CD4-positive, alpha-beta T cell (primary cell): ENCODE measurements at regions of chr13 and their contacts with region 1.

Region 1: GRCh38 chr13:45340926-45341750 is at the start of gene TPT1:
- DNase-seq: peak; percentile 99 to 100 (median 100)
- ATAC-seq: peak; percentile 84
- H3K4me3 ChIP-seq: peak within 1 kb of the TSS; percentile 98
- H3K4me3 Mint-ChIP-seq: peak within 1 kb of the TSS; percentile 99
- H3K27ac ChIP-seq: peak within 1 kb of the TSS; percentile 98 to 100
- H3K27ac Mint-ChIP-seq: peak within 1 kb of the TSS; percentile 84
- H3K4me1 ChIP-seq: peaks cover 40% of the 10 kb centered on the region
- H3K4me1 Mint-ChIP-seq: peaks cover 66% of the 10 kb centered on the region
- H3K27me3 ChIP-seq: no peaks in the 10 kb centered on the region
- H3K27me3 Mint-ChIP-seq: no peaks in the 10 kb centered on the region
- CTCF ChIP-seq: no peak
- total RNA-seq, gene TPT1: 8,742 to 8,834 TPM

Region 2: GRCh38 chr13:43397111-43397510 is 1944.0 kb before region 1 on chr13:
- CTCF ChIA-PET with region 1: no interaction called
- POLR2A ChIA-PET with region 1: no interaction called
- intact Hi-C with region 1: no loop called
- DNase-seq: no peak
- ATAC-seq: no peak
- H3K4me3 ChIP-seq: no peak overlapping the region
- H3K4me3 Mint-ChIP-seq: no peak overlapping the region
- H3K27ac ChIP-seq: no peak overlapping the region
- H3K27ac Mint-ChIP-seq: no peak overlapping the region
- H3K4me1 ChIP-seq: no peaks in the 10 kb centered on the region
- H3K4me1 Mint-ChIP-seq: no peaks in the 10 kb centered on the region
- H3K27me3 ChIP-seq: peaks cover 0 to 7% of the 10 kb centered on the region in 2 experiments
- H3K27me3 Mint-ChIP-seq: peaks cover 18% of the 10 kb centered on the region
- CTCF ChIP-seq: no peak

Region 3: DNA sequence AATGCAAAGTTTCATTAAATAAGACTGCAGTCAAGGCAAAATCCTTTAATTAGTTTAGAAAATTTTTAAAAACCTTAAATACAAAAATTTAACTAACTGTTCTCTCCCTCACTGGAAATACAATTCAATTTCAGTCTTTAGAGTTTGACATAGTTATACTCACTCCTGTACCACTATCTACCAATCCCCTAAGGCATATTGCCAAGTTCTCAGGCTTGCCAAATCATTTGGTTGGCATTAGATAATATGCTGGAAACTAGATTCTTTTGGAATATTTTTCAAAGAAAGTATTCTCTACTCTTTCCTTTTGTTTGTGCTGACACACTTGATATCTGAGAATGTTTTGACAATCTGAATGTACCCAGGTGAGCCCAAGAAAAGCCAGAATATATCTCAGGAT is 842.2 kb before region 1 on chr13:
- CTCF ChIA-PET with region 1: no interaction called
- POLR2A ChIA-PET with region 1: no interaction called
- intact Hi-C with region 1: no loop called
- DNase-seq: no peak
- ATAC-seq: no peak
- H3K4me3 ChIP-seq: no peak overlapping the region
- H3K4me3 Mint-ChIP-seq: no peak overlapping the region
- H3K27ac ChIP-seq: no peak overlapping the region
- H3K27ac Mint-ChIP-seq: no peak overlapping the region
- H3K4me1 ChIP-seq: no peaks in the 10 kb centered on the region
- H3K4me1 Mint-ChIP-seq: no peaks in the 10 kb centered on the region
- H3K27me3 ChIP-seq: no peaks in the 10 kb centered on the region
- H3K27me3 Mint-ChIP-seq: no peaks in the 10 kb centered on the region
- CTCF ChIP-seq: no peak

Region 4: DNA sequence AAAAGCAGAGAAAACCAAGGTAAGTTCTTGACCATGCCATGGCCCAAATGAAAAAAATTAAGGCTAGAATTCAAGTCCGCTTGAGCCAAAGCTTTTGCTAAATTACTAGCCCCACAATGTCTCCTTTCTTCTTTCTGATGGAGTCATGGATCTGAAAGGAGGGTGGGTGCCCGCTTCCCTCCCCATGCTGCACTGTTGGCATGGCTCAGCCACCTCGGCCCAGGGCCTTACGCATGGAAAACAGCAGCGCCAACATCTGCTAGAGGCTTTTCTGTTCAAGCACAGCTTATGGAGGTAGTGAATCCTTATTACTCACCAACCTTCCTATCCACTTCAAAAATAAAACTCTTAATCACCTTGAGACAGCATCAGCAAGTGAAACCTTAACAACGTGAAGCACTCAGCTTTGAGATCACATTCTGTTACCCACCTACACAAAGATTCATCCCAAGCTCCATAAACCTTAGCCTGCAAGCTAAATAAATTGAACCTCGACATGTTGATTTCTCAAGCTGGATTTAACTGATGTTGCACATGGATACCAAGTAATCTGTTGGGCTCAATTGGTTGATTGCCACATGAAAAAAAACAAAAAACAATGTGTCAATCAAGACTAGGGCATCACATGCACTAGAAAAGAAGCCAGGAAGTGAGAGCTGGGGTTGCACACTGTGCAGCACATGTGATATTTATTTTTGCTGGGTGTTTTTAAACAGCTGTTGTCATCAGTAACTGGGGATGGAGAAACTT is 43.5 kb before region 1 on chr13:
- CTCF ChIA-PET with region 1: no interaction called
- POLR2A ChIA-PET with region 1: interaction called, 10 read pairs
- intact Hi-C with region 1: no loop called
- DNase-seq: peak in 4 of 14 experiments; percentile 8 to 54 (median 48)
- ATAC-seq: peak; percentile 86
- H3K4me3 ChIP-seq: no peak overlapping the region
- H3K4me3 Mint-ChIP-seq: peak overlapping the region; percentile 23
- H3K27ac ChIP-seq: peak overlapping the region; percentile 44 to 53
- H3K27ac Mint-ChIP-seq: peak overlapping the region; percentile 76
- H3K4me1 ChIP-seq: peaks cover 33% of the 10 kb centered on the region
- H3K4me1 Mint-ChIP-seq: peaks cover 44% of the 10 kb centered on the region
- H3K27me3 ChIP-seq: no peaks in the 10 kb centered on the region
- H3K27me3 Mint-ChIP-seq: peaks cover 2% of the 10 kb centered on the region
- CTCF ChIP-seq: no peak

Region 5: DNA sequence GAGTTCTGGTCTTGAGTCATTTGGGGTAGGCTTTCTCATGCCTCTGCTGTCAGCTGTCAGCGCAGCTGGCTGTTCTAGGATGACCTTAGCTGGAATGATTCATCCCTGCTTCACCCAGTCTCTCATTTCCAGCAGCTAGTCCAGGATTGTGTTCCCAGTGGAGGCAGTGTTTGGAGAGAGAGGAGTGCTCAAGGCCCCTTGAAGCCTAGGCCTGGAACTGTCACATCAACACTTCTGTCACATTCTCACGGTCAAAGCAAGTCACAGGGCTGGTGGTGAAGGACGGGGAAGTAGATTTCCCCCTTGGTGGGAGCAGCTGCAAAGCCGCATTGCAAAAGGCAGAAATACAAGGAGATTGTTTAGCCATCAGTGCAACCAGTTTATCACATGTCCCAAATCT is 15.3 kb before region 1 on chr13:
- CTCF ChIA-PET with region 1: interaction called, 3 read pairs
- POLR2A ChIA-PET with region 1: interaction called, 15 read pairs
- intact Hi-C with region 1: no loop called
- DNase-seq: peak in 1 of 14 experiments; percentile 42
- ATAC-seq: no peak
- H3K4me3 ChIP-seq: no peak overlapping the region
- H3K4me3 Mint-ChIP-seq: no peak overlapping the region
- H3K27ac ChIP-seq: no peak overlapping the region
- H3K27ac Mint-ChIP-seq: no peak overlapping the region
- H3K4me1 ChIP-seq: peaks cover 37% of the 10 kb centered on the region
- H3K4me1 Mint-ChIP-seq: peaks cover 48% of the 10 kb centered on the region
- H3K27me3 ChIP-seq: no peaks in the 10 kb centered on the region
- H3K27me3 Mint-ChIP-seq: no peaks in the 10 kb centered on the region
- CTCF ChIP-seq: no peak

Region 6: GRCh38 chr13:45393941-45394570 is 52.9 kb after region 1 on chr13:
- CTCF ChIA-PET with region 1: interaction called, 16 read pairs
- POLR2A ChIA-PET with region 1: interaction called, 15 read pairs
- intact Hi-C with region 1: loop called in 1 of 2 experiments (anchors 2 kb)
- DNase-seq: peak in 8 of 14 experiments; percentile 13 to 71 (median 43)
- ATAC-seq: no peak
- H3K4me3 ChIP-seq: no peak overlapping the region
- H3K4me3 Mint-ChIP-seq: no peak overlapping the region
- H3K27ac ChIP-seq: no peak overlapping the region
- H3K27ac Mint-ChIP-seq: peak overlapping the region; percentile 86
- H3K4me1 ChIP-seq: peaks cover 32% of the 10 kb centered on the region
- H3K4me1 Mint-ChIP-seq: peaks cover 48% of the 10 kb centered on the region
- H3K27me3 ChIP-seq: no peaks in the 10 kb centered on the region
- H3K27me3 Mint-ChIP-seq: no peaks in the 10 kb centered on the region
- CTCF ChIP-seq: peak; percentile 70

Region 7: DNA sequence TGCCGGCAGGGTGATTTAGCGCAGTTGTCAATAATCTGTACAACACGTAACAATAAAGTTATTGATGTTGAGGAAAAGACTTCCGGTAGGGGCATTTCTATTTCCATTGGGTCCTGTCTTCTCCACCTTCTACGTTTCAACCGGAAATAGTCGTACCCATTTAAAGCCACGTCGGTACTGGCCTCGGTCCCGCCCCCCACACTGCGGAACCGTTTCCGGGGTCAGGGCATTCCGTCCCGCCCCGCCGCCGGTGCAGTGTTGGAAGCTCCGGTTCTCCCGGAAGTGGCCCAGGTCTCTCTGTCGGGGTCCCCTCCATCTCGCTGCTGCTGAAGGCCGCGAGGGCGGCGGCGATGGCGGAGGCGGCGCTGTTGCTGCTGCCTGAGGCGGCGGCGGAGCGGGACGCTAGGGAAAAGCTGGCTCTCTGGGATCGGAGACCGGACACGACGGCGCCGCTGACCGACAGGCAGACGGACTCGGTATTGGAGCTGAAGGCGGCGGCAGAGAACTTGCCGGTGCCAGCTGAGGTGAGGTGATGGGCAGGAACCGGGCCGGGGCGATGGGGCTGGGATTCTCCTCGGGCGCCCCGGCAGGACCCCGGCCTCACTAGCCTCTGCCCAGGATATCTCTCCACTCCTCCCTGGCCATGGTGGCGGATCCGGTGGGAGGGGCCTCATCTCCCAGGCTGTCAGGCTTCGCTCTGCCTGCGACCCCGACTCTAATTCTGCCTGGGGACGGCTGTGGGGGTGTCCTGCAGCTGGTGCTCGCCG is 123.7 kb after region 1 on chr13 and contains the start of gene COG3:
- CTCF ChIA-PET with region 1: interaction called, 9 read pairs
- POLR2A ChIA-PET with region 1: interaction called, 30 read pairs
- intact Hi-C with region 1: loop called (anchors 2 kb)
- DNase-seq: peak; percentile 88 to 98 (median 93)
- ATAC-seq: peak; percentile 93
- H3K4me3 ChIP-seq: peak within 1 kb of the TSS; percentile 94
- H3K4me3 Mint-ChIP-seq: peak within 1 kb of the TSS; percentile 84
- H3K27ac ChIP-seq: peak within 1 kb of the TSS; percentile 78 to 97
- H3K27ac Mint-ChIP-seq: peak within 1 kb of the TSS; percentile 85
- H3K4me1 ChIP-seq: peaks cover 30% of the 10 kb centered on the region
- H3K4me1 Mint-ChIP-seq: peaks cover 60% of the 10 kb centered on the region
- H3K27me3 ChIP-seq: no peaks in the 10 kb centered on the region
- H3K27me3 Mint-ChIP-seq: no peaks in the 10 kb centered on the region
- CTCF ChIP-seq: peak; percentile 50
- total RNA-seq, gene COG3: 52.8 to 57.0 TPM